GM10248 (cell line): ENCODE measurements at regions of chr22 and their contacts with region 1.

Region 1: DNA sequence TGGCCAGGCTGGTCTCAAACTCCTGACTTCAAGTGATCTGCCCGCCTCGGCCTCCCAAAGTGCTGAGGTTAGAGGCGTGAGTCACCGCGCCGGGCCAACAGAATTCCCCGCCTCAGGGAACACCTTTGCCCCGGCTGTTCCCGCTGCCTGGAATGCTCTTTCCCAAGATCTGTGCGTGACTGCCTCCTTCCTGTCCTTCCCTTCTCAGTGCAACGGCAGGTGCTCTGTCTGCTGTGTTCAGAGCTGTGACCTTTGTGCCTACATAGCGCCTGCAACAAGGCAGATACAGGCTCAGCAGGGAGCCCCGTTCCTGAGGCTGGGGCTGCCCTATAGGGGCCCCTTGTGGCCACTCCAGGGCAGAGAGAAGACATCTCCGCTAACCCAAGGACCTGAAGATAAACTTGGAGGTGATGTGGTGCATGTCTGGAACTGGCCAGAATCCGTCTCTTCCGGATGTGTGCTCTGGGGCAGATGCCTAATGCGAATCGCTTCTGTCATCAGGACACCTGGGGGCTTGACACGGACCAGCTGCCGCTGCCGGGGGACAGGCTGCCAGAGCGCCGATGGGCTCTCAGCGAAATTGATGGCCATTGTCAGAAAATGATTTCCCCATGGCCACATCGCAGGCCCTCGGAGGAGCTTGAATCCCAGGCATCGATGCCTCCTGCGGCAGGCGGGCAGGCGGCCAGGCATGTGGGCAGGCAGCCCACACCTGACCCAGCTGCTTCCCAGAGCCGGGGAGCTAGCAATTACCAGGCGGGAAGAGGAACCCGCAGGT is 43.5 kb upstream of the TCF20 start:
- DNase-seq: peak; percentile 65
- CTCF ChIP-seq: peak; percentile 38

Region 2: GRCh38 chr22:42142771-42143461 is 171.1 kb before region 1 on chr22:
- CTCF ChIA-PET with region 1: no interaction called
- POLR2A ChIA-PET with region 1: no interaction called
- DNase-seq: no peak
- CTCF ChIP-seq: no peak

Region 3: DNA sequence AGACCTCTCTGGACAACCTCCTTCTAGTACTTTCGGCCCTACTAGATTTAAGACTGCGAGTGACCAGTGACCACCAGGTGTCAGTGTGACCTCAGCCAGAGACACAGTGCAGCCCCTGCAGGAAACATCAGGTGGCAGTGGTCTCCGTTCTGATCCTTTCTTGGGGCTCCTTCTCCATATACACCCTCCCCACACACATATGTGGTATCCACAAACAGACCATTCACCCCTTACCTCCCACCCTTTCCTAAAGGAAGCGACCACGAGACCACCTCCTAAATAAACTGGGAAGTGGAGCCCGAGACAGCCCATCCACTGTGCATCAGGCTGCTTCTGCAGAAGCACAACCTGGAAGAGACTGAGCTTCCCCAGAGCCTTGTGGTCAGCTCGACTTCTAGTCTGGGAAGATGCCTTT is 144.9 kb before region 1 on chr22:
- CTCF ChIA-PET with region 1: interaction called, 17 read pairs
- POLR2A ChIA-PET with region 1: no interaction called
- DNase-seq: peak; percentile 86
- CTCF ChIP-seq: peak; percentile 92

Region 4: DNA sequence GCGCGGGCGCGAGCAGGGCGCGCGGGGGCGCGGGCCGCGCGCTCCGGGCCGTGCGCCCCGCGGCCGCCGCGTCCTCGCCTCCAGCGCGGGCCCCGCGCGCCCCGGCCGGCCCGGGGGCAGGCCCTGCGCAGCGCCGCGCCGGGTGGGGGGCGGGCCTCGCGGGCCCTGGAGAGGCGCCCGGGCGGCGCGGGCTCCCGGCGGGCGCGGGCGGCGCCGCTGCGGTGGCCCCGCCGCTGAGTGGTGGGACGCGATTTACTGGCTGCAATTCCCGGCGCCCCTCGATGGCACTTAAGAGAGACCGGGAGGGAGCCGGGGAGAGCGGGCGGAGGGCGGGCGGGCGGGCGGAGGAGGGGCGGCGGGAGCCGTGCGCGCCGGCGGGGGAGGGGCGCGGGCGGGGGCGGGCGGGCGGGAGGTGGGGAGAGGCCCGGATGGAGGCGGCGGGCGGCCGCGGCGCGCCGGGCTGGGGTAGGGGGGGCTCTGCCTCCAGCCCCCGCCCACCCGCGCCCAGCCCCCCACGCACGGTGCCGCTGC is 29.6 kb after region 1 on chr22:
- CTCF ChIA-PET with region 1: no interaction called
- POLR2A ChIA-PET with region 1: no interaction called
- DNase-seq: no peak
- CTCF ChIP-seq: no peak

Region 5: DNA sequence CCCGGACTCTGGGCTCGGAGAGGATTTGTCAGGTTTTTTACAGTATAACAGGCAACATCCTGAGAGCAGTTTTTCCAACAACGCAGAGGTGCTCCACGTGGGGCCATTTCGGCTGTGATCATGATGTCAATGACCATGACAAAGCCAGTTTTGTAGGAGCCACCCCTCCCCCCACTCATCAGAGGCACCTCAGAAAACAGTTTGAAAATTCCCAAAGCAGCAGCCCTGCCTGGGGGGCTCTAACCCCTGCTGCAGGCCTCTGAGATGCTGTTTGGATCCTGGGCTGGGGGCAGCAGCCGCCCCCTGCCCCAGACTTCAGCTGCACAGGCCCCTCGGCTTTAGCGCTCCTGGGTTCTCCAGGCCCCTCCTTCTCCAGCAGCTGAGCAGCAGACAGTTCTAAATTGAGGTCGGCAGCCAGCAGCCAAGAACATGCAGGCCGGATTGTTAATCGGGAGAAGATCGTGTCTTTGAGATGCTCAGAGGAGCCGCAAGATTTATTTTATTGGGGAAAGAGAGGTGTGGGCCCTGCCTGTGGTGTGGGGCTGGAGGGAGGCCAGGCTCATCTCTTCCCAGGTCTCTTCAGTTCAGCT is 98.8 kb after region 1 on chr22:
- CTCF ChIA-PET with region 1: no interaction called
- POLR2A ChIA-PET with region 1: no interaction called
- DNase-seq: no peak
- CTCF ChIP-seq: no peak